Panc1 (cell line): ENCODE measurements at regions of chr3 and their contacts with region 1.

Region 1: GRCh38 chr3:116176974-116177555 is 268.2 kb downstream of the LSAMP start:
- DNase-seq: no peak
- ATAC-seq: no peak
- H3K4me3 ChIP-seq: no peak overlapping the region
- H3K27ac ChIP-seq: no peak overlapping the region
- H3K4me1 ChIP-seq: no peaks in the 10 kb centered on the region
- H3K27me3 ChIP-seq: no peaks in the 10 kb centered on the region
- CTCF ChIP-seq: no peak

Region 2: DNA sequence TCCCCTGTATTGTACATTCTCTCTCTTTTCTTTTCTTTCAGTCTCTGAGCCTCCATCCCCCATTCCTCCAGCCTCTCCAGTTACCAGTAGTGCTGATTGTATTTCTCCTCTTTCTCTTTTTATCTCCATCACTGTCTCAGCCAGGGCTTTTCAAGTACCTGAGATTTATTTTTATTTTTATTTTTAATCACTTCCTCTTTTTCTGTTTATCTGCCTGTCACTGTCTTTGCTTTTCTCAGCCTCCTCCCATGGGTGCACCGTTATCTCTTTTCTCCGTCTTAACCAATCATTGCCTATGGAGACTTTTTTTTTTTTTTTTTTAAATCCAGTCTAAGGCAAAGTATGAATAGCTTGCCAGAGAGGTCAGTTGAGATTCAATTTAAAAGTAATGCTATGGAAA is 194.4 kb before region 1 on chr3:
- CTCF ChIA-PET with region 1: no interaction called
- POLR2A ChIA-PET with region 1: interaction called, 12 read pairs
- in situ Hi-C with region 1: no loop called
- intact Hi-C with region 1: no loop called
- DNase-seq: no peak
- ATAC-seq: no peak
- H3K4me3 ChIP-seq: no peak overlapping the region
- H3K27ac ChIP-seq: no peak overlapping the region
- H3K4me1 ChIP-seq: no peaks in the 10 kb centered on the region
- H3K27me3 ChIP-seq: no peaks in the 10 kb centered on the region
- CTCF ChIP-seq: no peak